ENCODE measurements at regions of chr6 and their contacts with region 1.

Region 1: DNA sequence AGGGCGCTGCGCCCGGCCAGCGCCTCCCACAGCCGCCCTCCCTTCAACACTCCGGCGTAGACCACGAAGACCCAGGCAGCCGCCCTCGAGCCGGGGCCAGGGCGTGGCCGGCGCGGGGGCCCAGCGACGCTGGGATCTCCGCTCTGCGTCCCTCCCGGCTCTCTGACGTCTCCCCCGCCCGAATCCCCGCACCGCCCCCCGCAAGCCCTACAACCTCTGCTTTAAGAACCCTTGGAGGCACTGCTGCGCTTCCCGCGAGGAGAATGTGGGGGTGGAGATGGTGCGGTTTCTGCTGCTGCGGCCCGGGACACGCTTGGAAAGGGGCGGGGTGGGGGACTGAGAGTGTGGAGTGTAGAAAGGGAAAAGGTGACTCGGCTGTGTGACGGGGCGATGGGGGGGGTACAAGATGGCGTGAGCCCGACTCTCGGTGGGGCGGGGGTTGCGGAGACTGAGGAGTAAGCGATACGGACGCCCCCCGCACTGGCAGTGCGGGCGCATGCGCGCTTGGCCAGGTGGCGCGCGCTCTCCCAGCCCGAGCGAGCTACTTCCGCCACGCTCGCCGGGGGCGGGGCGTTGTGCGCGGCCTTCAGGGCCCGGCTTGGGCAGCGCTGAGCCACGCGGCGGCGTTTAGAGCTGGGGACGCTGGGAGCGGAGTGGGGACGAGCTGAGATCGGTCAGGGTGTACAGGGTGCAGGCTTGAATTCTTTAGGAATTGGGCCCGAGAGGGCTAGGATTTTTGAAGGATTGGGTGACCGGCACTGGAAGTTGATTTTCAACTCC is at the start of gene SUPT3H:
- DNase-seq: peak; percentile 92
- H3K4me3 ChIP-seq: peak within 1 kb of the TSS; percentile 80
- H3K27ac ChIP-seq: peak within 1 kb of the TSS; percentile 21
- H3K4me1 ChIP-seq: peaks cover 16% of the 10 kb centered on the region
- CTCF ChIP-seq: peak; percentile 25; the same call in 1 of the 2 replicates
- total RNA-seq, gene SUPT3H: 0.44 and 1.1 TPM in 2 replicates

Region 2: DNA sequence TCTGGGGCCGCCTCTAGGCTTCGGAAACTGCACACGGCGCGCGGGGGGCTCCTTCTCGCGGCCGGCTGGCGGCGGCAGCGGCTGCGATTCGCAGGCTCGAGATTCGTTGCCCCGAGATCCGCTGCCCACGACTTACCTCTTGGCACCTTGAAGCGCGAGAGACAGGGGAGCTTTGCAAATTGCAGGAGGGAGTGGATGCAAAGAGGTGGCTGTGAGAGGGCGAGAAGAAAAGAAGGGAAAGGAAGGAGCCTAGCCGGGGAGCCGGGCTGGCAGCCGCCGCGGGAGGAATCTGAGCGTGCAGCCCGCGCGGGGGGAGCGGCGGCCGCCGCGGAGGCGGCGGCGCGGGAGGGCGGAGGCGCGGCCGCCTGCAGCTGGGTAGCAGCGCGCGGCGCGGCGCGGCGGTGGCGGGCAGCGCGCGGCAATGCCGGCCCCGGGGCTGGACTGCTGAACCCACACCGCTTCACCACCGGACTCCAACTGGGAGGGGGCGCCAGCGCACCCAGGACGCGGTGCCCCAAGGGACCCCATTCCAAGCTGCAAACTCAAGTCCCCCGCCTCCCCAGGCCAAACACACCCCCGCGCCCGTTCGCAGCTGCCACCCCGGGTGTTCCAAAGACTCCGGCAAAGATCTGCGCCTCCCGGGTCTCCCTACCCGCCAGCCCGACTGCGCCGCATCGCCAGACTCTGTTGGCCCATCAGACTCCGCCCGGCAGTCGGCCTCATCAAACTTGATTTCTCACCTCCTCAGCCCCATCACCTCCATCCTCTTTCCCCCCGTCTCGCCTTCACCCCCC is 44.2 kb after region 1 on chr6:
- CTCF ChIA-PET with region 1: no interaction called
- POLR2A ChIA-PET with region 1: interaction called, 3 read pairs
- intact Hi-C with region 1: loop called (anchors 5 kb)
- DNase-seq: peak; percentile 20
- H3K4me3 ChIP-seq: peak overlapping the region; percentile 52
- H3K27ac ChIP-seq: no peak overlapping the region
- H3K4me1 ChIP-seq: peaks cover 34% of the 10 kb centered on the region
- CTCF ChIP-seq: 0 out of 2 replicates have a peak, but pooled peaks have one; percentile 16

Region 3: GRCh38 chr6:45655630-45656422 is 278.1 kb after region 1 on chr6:
- CTCF ChIA-PET with region 1: interaction called, 3 read pairs
- POLR2A ChIA-PET with region 1: interaction called, 4 read pairs
- intact Hi-C with region 1: loop called (anchors 5 kb)
- DNase-seq: no peak
- H3K4me3 ChIP-seq: no peak overlapping the region
- H3K27ac ChIP-seq: no peak overlapping the region
- H3K4me1 ChIP-seq: peaks cover 35% of the 10 kb centered on the region
- CTCF ChIP-seq: no peak

Measured in OCI-LY7 (cell line).